Endothelial cell of umbilical vein (primary cell): ENCODE measurements at regions of chr18 and their contacts with region 1.

Region 1: DNA sequence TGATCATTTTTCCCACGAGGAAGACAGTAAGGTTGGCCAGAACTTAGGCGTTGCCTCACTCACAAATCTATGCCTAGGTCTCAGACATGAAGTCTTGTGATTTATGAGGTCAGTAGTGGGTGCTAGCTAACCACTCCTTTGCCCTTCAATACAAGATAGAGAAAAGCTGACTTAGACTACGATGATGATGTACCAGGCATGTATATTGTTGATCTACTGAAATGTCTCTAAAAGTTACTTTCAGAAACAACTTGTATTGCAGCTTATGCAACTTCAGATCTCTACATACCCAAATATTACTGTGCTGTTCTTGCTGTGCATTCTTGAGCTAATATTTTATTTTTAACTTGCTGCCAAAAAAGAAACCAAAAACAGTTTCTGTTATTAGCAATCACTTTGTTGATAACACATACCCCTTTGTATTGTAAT is 30.6 kb downstream of the MAPRE2 start:
- DNase-seq: peak; percentile 41
- H3K4me3 ChIP-seq: no peak overlapping the region
- H3K27ac ChIP-seq: peak overlapping the region; percentile 56
- H3K4me1 ChIP-seq: peaks cover 58% of the 10 kb centered on the region
- H3K27me3 ChIP-seq: no peaks in the 10 kb centered on the region
- CTCF ChIP-seq: no peak
- POLR2A ChIP-seq: no peak

Region 2: GRCh38 chr18:35040988-35041814 is 30.6 kb before region 1 on chr18 and contains the start of gene MAPRE2:
- CTCF ChIA-PET with region 1: interaction called, 25 read pairs
- POLR2A ChIA-PET with region 1: interaction called, 4 read pairs
- dilution Hi-C with region 1: no loop called
- intact Hi-C with region 1: loop called (anchors 1 kb)
- DNase-seq: peak; percentile 99
- H3K4me3 ChIP-seq: peak within 1 kb of the TSS; percentile 88 to 99 (median 89)
- H3K27ac ChIP-seq: peak within 1 kb of the TSS; percentile 80
- H3K4me1 ChIP-seq: peaks cover 61% of the 10 kb centered on the region
- H3K27me3 ChIP-seq: no peaks in the 10 kb centered on the region
- CTCF ChIP-seq: no peak
- POLR2A ChIP-seq: peak; percentile 96
- total RNA-seq, gene MAPRE2: 111 and 117 TPM in 2 replicates

Region 3: GRCh38 chr18:35060122-35060815 is 11.6 kb before region 1 on chr18:
- CTCF ChIA-PET with region 1: interaction called, 8 read pairs
- POLR2A ChIA-PET with region 1: no interaction called
- dilution Hi-C with region 1: no loop called
- intact Hi-C with region 1: loop called (anchors 1 kb)
- DNase-seq: no peak
- H3K4me3 ChIP-seq: no peak overlapping the region
- H3K27ac ChIP-seq: no peak overlapping the region
- H3K4me1 ChIP-seq: no peaks in the 10 kb centered on the region
- H3K27me3 ChIP-seq: no peaks in the 10 kb centered on the region
- CTCF ChIP-seq: no peak
- POLR2A ChIP-seq: no peak

Region 4: DNA sequence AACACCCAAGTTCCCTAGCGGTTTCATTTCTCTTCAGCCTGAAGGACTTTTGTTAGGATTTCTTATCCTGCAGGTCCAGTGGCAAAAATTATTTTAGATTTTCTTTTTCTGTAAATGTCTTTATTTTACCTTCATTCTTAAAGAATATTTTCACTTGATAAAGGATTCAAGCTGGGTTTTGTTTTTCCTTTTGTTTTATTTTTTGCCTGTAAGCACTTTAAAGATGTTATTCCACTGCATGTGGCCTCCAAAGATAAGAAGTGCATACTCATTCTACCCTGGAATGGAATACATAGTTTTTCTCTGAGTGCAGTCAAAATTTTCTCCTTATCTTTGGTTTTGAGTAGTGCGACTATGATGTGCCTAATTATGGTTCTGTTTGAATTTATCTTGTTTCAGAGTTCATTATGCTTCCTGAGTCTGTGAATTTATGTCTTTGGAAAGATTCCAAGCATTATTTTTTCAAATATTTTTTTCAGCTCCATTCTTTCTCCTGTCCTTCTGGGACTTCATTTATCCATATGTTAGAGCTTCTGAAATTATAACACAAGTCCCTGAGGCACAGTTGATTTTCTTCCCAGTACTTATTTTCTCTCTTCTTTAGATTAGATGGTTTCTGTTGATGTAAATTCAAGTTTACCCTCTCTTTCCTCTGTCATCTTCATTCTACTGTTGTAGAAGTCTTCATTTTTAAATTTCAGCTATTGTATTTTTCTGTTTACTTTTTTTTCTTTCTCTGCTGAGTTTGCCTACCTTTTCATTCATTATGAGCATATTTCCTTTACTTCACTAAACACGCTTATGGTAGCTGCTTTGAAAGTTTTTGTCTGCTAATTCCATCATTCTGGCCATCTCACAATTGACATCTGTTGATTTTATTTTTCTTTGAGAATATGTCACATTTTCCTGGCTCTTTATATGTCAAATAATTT is 39.0 kb after region 1 on chr18:
- CTCF ChIA-PET with region 1: interaction called, 3 read pairs
- POLR2A ChIA-PET with region 1: no interaction called
- dilution Hi-C with region 1: no loop called
- intact Hi-C with region 1: loop called (anchors 2 kb)
- DNase-seq: peak; percentile 86
- H3K4me3 ChIP-seq: no peak overlapping the region
- H3K27ac ChIP-seq: no peak overlapping the region
- H3K4me1 ChIP-seq: peaks cover 11% of the 10 kb centered on the region
- H3K27me3 ChIP-seq: no peaks in the 10 kb centered on the region
- CTCF ChIP-seq: no peak
- POLR2A ChIP-seq: no peak

Region 5: GRCh38 chr18:35467624-35468016 is 395.8 kb after region 1 on chr18:
- CTCF ChIA-PET with region 1: no interaction called
- POLR2A ChIA-PET with region 1: no interaction called
- dilution Hi-C with region 1: no loop called
- intact Hi-C with region 1: loop called (anchors 10 kb)
- DNase-seq: peak; percentile 18
- H3K4me3 ChIP-seq: no peak overlapping the region
- H3K27ac ChIP-seq: peak overlapping the region; percentile 90
- H3K4me1 ChIP-seq: peaks cover 72% of the 10 kb centered on the region
- H3K27me3 ChIP-seq: no peaks in the 10 kb centered on the region
- CTCF ChIP-seq: no peak
- POLR2A ChIP-seq: peak; percentile 4

Region 6: GRCh38 chr18:35616664-35617423 is 545.0 kb after region 1 on chr18:
- CTCF ChIA-PET with region 1: no interaction called
- POLR2A ChIA-PET with region 1: no interaction called
- dilution Hi-C with region 1: no loop called
- intact Hi-C with region 1: loop called (anchors 10 kb)
- DNase-seq: peak; percentile 95
- H3K4me3 ChIP-seq: peak overlapping the region in 1 of 3 experiments; percentile 54
- H3K27ac ChIP-seq: peak overlapping the region; percentile 98
- H3K4me1 ChIP-seq: peaks cover 83% of the 10 kb centered on the region
- H3K27me3 ChIP-seq: no peaks in the 10 kb centered on the region
- CTCF ChIP-seq: no peak
- POLR2A ChIP-seq: peak; percentile 52